ENCODE measurements at regions of chr17 and their contacts with region 1.

Region 1: DNA sequence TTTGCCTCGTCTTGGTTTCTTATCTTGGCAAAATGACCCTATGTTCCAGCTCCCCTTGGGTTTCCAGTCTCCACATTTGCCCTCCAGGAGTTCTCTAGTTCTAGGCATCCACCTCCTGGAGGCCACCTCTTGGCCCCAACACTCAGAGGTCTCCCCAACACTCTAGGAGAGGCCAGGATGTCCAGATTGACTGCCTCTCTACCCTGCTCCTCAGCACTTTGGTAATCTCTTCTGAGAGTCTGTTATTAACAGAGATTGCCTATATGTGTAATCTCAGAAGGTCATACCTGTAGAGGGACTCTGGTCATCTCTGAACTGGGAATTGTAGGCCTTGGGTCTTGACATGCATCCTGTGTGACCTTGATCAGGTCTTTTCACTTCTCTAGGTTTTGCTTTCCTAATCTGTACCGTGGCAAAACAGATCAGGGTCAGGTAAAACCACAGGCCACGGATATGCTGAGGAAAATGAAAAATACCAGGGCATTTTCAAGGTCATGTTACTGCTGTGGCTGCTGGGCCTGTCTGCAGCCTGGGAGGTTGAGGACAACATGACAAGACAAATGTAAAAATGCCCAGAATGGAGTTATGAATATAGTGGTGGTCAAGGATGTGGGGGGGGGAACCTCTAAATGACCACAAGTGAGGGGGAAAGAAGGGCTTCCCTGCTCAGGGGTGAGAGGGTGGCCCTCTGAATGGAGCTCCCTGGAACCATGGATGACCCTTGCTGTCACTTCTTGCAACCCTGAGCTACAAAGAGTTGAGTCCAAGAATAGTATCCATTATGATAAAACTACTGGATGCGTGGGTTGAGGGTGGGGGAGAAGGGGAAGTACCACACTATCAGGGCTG is 5.0 kb upstream of the CCL4L2 start:
- DNase-seq: no peak

Region 2: DNA sequence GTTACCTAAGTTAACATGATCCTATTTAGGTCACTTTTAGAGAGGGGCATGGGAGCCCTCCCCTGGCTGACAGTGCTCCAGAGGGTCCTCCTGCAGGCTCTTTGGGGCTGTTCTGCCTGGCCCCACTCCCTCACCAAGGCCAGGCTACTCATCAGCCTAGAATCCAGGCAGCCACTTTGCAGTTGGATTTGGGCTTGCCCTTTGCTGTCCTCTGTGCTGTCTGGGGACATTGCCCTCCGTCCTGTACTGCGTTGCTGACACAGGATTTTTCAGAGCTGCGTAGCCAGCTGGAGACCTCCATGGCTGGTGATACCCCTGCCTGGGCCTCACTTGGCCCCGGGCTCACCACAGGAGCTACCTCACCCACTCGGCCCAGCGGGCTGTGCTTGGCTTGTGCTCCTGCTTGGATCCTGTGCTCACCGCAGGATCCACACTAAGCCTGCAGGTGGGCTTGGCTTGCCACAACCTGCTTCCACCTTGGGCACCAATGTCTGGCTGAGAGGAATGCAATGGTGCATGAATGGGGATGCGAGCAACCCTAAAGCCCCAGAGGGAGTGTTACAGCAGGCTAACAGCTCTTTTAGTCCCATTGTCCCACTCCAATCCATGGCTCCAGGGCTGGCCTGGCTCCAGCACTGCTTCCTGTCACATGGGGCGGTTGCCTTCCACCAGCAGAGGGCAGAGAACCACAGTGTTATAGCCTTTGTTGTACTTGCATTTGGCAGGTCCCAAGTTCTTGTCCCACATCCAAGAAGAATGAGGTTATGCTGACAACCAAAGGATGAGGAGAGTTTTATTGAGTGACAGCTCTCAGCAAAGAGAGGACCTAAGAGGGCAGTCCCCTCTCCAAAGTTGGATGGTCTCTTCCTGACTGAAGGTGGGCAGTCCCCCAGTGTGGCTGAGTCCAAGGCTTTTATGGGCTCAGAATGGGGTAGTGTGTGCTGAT is 80.7 kb before region 1 on chr17:
- in situ Hi-C with region 1: loop called (anchors 25 kb)
- DNase-seq: no peak

Measured in KBM-7 (cell line).